Ovary (tissue), 10 donors: ENCODE measurements at regions of chr19 and their contacts with region 1.

Region 1: GRCh38 chr19:45187421-45188100 is 9.0 kb downstream of the BLOC1S3 start:
- DNase-seq: no peak
- H3K4me3 ChIP-seq: no peak overlapping the region
- H3K27ac ChIP-seq: no peak overlapping the region
- H3K4me1 ChIP-seq: no peaks in the 10 kb centered on the region
- H3K27me3 ChIP-seq: no peaks in the 10 kb centered on the region
- CTCF ChIP-seq: no peak
- EP300 ChIP-seq: no peak
- POLR2A ChIP-seq: no peak

Region 2: DNA sequence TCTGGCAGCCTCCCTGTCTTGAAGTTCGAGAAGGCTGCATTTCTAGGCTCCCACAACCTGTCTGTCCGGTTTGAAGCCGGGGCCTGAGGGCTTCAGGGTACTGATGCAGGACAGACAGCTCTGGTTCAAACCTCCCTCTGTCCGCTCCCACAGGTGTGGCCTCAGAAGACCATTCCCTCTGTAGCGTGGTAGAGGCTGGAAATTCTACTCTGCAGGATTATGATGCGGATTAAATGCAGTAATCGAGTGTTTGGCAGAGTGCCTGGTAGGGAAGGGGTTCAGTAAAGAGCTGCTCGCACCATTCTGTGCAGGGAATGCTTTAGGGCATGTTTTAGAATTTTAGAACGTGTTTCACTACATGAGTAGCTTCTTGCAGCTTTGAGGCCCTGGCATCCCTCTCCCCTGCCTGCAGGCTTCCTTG is 64.1 kb before region 1 on chr19:
- intact Hi-C with region 1: loop called in 1 of 4 experiments (anchors 2 kb)
- DNase-seq: no peak
- H3K4me3 ChIP-seq: no peak overlapping the region
- H3K27ac ChIP-seq: no peak overlapping the region
- H3K4me1 ChIP-seq: no peaks in the 10 kb centered on the region
- H3K27me3 ChIP-seq: no peaks in the 10 kb centered on the region
- CTCF ChIP-seq: no peak
- EP300 ChIP-seq: no peak
- POLR2A ChIP-seq: no peak